A549 (cell line): ENCODE measurements at regions of chr12 and their contacts with region 1.

Region 1: DNA sequence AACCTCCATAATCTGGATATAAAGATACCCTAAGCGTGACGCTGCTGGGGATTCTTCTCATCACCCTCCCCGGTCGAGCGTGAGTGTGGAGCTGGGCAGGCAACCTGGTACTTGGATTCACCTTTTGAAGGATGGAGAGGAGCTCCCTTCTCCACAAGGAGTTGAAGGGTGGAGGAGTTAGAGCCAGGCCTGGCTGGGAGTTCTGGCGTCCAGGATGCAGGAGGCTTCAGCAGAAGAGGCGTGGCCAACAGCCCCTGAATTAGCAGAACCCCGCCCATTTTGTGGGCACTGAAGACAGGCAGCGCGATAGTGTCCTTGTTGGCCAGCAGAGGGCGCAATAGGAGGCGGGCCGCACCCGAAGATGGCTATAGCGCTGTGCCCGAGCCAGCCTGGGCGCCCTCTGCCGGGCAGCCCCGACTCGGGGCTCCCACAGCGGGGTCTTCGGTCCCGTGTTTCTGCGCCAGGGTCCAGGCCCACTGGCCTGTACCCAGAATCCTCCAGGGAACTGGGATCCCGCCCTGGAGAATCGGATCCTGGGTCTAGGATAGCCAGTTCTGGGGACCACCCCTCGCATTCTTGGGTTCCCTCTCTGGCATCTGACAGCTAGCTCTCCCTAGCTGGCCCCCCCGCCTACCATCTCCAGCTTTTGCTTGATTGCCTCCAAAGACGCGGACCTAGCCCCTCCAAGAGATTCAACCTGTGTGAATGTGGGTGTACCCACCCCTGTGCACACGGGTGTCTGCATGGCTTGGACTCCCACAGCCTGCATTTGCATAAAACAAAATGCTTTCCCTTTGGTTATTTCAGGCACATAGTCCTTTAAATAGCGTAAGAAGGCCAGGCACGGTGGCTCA is 26.0 kb upstream of the SMUG1 start:
- DNase-seq: peak; percentile 78 to 95
- ATAC-seq: peak; percentile 70 to 88
- H3K4me3 ChIP-seq: peak overlapping the region; percentile 35
- H3K27ac ChIP-seq: peak overlapping the region; percentile 27 to 77; a peak in 4 of 6 replicates
- H3K4me1 ChIP-seq: peaks cover 9% of the 10 kb centered on the region; the same call in 1 of the 3 replicates
- CTCF ChIP-seq: peak; percentile 100
- EP300 ChIP-seq: no peak
- POLR2A ChIP-seq: no peak
- RAD21 ChIP-seq: peak; percentile 38 to 67

Region 2: GRCh38 chr12:53844989-53845844 is 369.6 kb before region 1 on chr12:
- CTCF ChIA-PET with region 1: no interaction called
- POLR2A ChIA-PET with region 1: no interaction called
- DNase-seq: peak; percentile 72 to 88
- ATAC-seq: peak; percentile 98
- H3K4me3 ChIP-seq: no peak overlapping the region
- H3K27ac ChIP-seq: peak overlapping the region; percentile 61 to 81
- H3K4me1 ChIP-seq: peaks cover 32% of the 10 kb centered on the region
- CTCF ChIP-seq: no peak
- EP300 ChIP-seq: no peak
- POLR2A ChIP-seq: no peak
- RAD21 ChIP-seq: peak; percentile 8 to 24; a peak in 1 of 5 replicates

Region 3: GRCh38 chr12:54005853-54006686 is 208.7 kb before region 1 on chr12:
- CTCF ChIA-PET with region 1: interaction called, 1,074 read pairs
- POLR2A ChIA-PET with region 1: interaction called, 5 read pairs
- DNase-seq: peak; percentile 82 to 86
- ATAC-seq: peak; percentile 59 to 82
- H3K4me3 ChIP-seq: no peak overlapping the region
- H3K27ac ChIP-seq: peak overlapping the region in 1 of 2 experiments; percentile 74; a peak in 3 of 6 replicates
- H3K4me1 ChIP-seq: peaks cover 19% of the 10 kb centered on the region
- CTCF ChIP-seq: peak; percentile 93
- EP300 ChIP-seq: no peak
- POLR2A ChIP-seq: no peak
- RAD21 ChIP-seq: peak; percentile 97 to 98

Region 4: DNA sequence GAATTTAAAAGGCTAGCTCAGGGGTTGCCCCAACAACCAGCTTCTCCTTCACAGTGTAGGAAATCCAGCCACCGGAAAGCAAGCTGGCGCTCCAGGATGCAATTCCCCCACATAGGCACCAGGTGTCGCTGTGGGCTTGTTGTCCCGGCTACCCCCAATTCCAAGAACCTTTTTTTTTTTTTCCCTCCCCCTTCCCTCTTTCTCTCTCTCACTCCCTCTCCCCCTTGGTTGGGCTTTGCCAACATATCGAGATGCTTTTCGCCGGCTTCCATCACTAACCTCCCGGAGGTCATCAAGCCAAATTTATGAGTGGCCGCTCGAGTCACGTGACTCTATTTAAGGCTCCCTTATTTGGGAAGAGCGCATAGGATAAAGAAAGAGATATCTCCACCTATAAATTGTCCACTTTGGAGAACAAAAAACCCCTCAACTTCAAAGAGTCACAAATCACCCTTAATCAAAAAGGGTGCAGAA is 182.1 kb before region 1 on chr12 and contains the start of gene HOXC5:
- CTCF ChIA-PET with region 1: interaction called, 96 read pairs
- POLR2A ChIA-PET with region 1: no interaction called
- DNase-seq: peak; percentile 87 to 92
- ATAC-seq: peak; percentile 40 to 59
- H3K4me3 ChIP-seq: peak within 1 kb of the TSS; percentile 56
- H3K27ac ChIP-seq: peak within 1 kb of the TSS; percentile 76 to 93
- H3K4me1 ChIP-seq: peaks cover 18% of the 10 kb centered on the region
- CTCF ChIP-seq: peak; percentile 98
- EP300 ChIP-seq: no peak
- POLR2A ChIP-seq: no peak
- RAD21 ChIP-seq: peak; percentile 92 to 94
- polyA plus RNA-seq, gene HOXC5: 0.41 and 0.49 TPM in 2 replicates

Region 5: DNA sequence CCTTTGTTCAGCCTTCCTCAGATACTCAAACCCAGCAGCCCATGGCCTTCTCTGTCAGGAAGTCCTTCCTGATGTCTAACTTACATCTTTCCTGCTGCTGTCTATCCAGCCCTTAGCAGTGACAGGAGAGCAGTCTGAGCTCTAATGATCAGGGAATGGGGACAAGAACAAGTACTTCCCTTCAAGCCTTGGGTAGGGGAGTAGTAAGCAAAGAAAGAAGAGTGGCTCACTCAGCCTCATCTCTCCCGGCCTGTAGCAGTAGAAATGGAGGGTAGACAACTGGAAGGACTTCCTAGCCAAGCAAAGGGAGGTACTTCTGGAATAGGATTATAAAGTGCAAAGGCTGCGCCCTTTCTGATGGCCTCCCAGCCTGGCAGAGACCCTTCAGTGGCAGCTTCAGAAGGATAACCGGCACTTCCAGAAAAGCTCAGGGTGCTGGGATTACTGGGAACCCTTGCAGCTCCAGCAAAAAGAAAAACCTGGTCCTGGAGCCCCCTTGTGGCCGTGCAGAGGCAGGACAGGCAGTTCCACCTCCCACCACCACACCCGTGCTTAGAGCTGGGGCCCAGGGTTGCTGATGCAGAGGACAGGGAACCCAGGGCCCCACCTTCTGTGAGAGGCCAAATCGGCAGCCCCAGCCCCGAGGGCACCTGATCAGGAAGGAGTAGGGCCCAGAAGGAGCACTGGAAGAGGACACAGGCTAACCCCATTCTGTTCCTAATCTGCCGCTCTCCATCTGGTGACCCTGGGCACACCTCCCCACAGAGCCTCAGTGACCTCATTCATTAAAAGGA is 13.6 kb before region 1 on chr12:
- CTCF ChIA-PET with region 1: interaction called, 200 read pairs
- POLR2A ChIA-PET with region 1: no interaction called
- DNase-seq: peak; percentile 82 to 91
- ATAC-seq: peak; percentile 91 to 95
- H3K4me3 ChIP-seq: no peak overlapping the region
- H3K27ac ChIP-seq: no peak overlapping the region
- H3K4me1 ChIP-seq: peaks cover 5% of the 10 kb centered on the region
- CTCF ChIP-seq: peak; percentile 84
- EP300 ChIP-seq: no peak
- POLR2A ChIP-seq: no peak
- RAD21 ChIP-seq: peak; percentile 76 to 81

Region 6: GRCh38 chr12:54240971-54241588 is 26.3 kb after region 1 on chr12:
- CTCF ChIA-PET with region 1: interaction called, 43 read pairs
- POLR2A ChIA-PET with region 1: interaction called, 6 read pairs
- DNase-seq: no peak
- ATAC-seq: no peak
- H3K4me3 ChIP-seq: no peak overlapping the region
- H3K27ac ChIP-seq: no peak overlapping the region
- H3K4me1 ChIP-seq: no peaks in the 10 kb centered on the region
- CTCF ChIP-seq: no peak
- EP300 ChIP-seq: no peak
- POLR2A ChIP-seq: no peak
- RAD21 ChIP-seq: no peak

Region 7: GRCh38 chr12:54359033-54359761 is 144.4 kb after region 1 on chr12:
- CTCF ChIA-PET with region 1: interaction called, 108 read pairs
- POLR2A ChIA-PET with region 1: interaction called, 5 read pairs
- DNase-seq: peak; percentile 99 to 100
- ATAC-seq: peak; percentile 80 to 92
- H3K4me3 ChIP-seq: peak overlapping the region; percentile 54
- H3K27ac ChIP-seq: peak overlapping the region; percentile 81 to 91
- H3K4me1 ChIP-seq: peaks cover 28% of the 10 kb centered on the region
- CTCF ChIP-seq: no peak
- EP300 ChIP-seq: no peak
- POLR2A ChIP-seq: peak; percentile 38; the same call in 1 of the 2 replicates
- RAD21 ChIP-seq: no peak